ENCODE measurements at regions of chr20 and their contacts with region 1.

Region 1: DNA sequence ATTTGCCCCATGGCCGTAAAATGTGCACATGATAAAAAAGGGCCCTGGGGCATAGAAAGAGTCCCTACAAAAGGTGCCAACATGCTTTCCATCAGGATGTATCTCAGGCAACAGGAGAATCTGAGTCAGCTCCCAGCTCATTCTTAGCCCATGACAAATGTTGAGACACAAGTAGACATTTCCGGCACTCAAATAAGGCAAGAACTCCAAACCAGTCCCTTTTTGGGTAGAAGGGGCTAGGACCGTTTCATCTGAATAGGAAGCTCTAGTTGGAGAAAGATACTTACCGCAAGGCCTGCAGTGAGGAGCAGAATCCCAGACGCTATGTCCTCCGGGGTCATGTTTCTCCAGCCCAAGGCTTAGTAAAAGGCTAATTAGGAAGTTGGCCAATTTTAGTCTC is 261.0 kb upstream of the RIN2 start:
- DNase-seq: no peak
- ATAC-seq: no peak
- H3K4me3 ChIP-seq: no peak overlapping the region
- H3K27ac ChIP-seq: no peak overlapping the region
- H3K4me1 ChIP-seq: peaks cover 0 to 19% (median 0%) of the 10 kb centered on the region in 9 donors
- H3K27me3 ChIP-seq: peaks cover 0 to 4% (median 0%) of the 10 kb centered on the region in 7 donors
- CTCF ChIP-seq: no peak

Region 2: GRCh38 chr20:19552134-19552835 is 55.2 kb after region 1 on chr20:
- intact Hi-C with region 1: loop called in 1 of 10 experiments (anchors 10 kb)
- DNase-seq: peak in 1 of 2 donors; percentile 8
- ATAC-seq: peak in 5 of 8 donors; percentile 50 to 86 (median 62)
- H3K4me3 ChIP-seq: no peak overlapping the region
- H3K27ac ChIP-seq: no peak overlapping the region
- H3K4me1 ChIP-seq: peaks cover 0 to 5% (median 0%) of the 10 kb centered on the region in 9 donors
- H3K27me3 ChIP-seq: peaks cover 0 to 11% (median 0%) of the 10 kb centered on the region in 7 donors
- CTCF ChIP-seq: no peak

Region 3: DNA sequence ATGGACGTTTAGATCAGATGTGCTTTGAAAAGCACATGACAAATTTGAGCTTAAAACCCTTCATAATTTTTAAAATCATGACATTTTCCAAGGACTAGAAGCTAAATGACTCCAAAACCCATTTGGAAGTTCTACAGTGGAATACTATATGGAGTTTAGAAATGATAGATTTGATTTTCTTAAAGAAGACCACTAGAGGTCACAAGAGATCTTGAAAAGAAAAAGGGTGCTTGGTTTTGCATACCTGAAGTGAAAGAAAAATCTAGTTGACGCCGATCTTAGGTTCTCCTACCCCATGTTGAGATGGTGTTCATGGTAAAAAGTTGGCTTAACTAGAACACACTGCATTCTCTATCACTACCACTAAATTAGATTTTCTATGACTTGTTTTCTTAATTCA is 586.7 kb after region 1 on chr20:
- intact Hi-C with region 1: no loop called
- DNase-seq: no peak
- ATAC-seq: peak in 6 of 8 donors; percentile 11 to 46 (median 32)
- H3K4me3 ChIP-seq: peak overlapping the region in 2 of 10 donors; percentile 2 to 16
- H3K27ac ChIP-seq: peak overlapping the region in 9 of 10 donors; percentile 64 to 87 (median 84)
- H3K4me1 ChIP-seq: peaks cover 0 to 28% (median 4%) of the 10 kb centered on the region in 9 donors
- H3K27me3 ChIP-seq: peaks cover 0 to 17% (median 5%) of the 10 kb centered on the region in 7 donors
- CTCF ChIP-seq: peak; percentile 18 to 68 (median 55)